Common myeloid progenitor, CD34-positive (primary cell): ENCODE measurements at regions of chr14 and their contacts with region 1.

Region 1: DNA sequence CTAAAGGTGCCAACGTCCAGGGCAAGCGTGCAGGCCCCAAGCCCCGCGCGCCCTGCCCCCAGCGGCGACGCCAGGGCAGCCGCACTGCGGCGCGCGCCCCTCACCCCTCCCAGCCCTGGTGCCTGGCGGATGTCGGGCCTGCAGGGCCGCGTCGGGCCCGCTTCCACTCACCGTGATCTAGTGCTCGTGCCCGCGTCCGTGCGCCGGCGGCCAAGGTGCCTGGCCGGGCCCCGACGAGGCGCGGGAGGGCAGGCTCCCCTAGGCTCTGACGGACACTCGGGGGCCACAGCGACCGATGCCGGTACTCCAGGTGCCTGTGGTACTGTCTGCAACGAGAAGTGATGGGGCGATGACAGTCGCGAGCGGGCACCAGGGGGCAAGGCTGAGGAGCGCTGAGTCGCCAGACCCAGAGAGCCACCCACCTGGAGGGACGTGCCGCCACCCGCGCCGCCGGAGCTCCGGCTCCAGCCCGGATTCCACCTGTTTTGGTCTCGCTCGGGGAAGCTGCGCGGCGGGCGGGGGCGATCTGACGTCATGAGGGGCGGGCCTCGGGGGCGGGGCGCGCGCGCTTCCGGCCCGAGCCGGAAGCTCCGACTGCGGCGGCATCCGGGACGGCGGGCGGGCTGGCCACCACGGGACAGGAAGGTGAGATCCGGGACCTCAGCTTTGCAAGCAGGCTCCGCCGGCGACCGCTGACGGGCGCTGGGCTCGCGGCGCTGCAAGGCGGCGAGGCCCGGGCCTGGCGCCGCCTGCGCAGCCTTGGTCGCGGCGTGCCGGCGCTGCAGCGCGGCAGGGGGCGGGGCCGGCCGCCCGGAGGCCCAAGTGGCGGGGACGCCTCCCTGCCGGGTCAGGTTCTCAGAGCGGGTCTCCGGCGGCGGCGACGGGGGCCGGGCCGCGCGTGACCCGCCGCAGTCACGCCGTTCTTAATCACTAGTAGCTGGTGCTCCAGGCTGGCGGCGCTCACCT is at the starts of genes LYSET and MOAP1:
- DNase-seq: peak; percentile 94 to 98 (median 96)
- H3K4me3 ChIP-seq: peak within 1 kb of the TSS; percentile 67 to 95 (median 89)
- H3K27ac ChIP-seq: peak within 1 kb of the TSS; percentile 85 to 90
- H3K4me1 ChIP-seq: peaks cover 0 to 26% (median 20%) of the 10 kb centered on the region in 4 experiments
- H3K27me3 ChIP-seq: no peaks in the 10 kb centered on the region

Region 2: DNA sequence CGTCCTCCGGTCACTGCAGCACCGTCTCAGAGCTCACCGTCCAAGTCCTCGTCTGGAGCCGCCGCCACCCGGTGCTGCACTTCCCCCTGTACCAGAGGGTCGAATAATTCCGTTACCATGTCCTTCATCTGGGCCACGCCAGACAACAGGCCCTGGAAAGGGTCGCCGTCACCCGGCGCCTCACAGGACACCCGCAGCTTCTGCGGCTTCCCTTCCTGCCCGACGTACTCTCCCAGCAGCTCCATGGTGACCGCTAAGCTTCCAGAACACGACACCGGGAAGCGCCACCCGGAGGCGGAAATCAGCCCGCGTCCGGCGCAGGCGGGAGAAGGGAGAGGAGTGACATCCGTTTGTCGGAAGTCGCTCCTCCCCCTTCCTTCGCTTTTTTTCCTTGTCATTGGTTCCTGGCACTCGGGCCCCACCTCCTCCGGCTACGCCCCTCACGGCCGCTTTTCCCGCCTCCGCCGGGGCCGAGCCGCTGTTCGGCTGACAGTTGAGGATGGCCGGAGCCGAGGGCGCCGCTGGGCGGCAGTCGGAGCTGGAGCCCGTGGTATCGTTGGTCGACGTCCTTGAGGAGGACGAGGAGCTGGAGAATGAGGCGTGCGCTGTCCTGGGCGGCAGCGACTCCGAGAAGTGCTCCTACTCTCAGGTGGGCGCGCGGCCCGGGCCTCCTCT is 22.3 kb after region 1 on chr14 and contains the starts of genes GON7 and UBR7:
- CTCF ChIA-PET with region 1: interaction called, 27 read pairs
- POLR2A ChIA-PET with region 1: interaction called, 15 read pairs
- DNase-seq: peak; percentile 90 to 93 (median 91)
- H3K4me3 ChIP-seq: peak within 1 kb of the TSS; percentile 84 to 97 (median 95)
- H3K27ac ChIP-seq: peak within 1 kb of the TSS; percentile 15 to 85
- H3K4me1 ChIP-seq: peaks cover 13 to 31% (median 24%) of the 10 kb centered on the region in 4 experiments
- H3K27me3 ChIP-seq: no peaks in the 10 kb centered on the region